Activated CD4-positive, alpha-beta memory T cell treated with anti-CD3 and anti-CD28 coated beads for 36 hours (primary cell): ENCODE measurements at regions of chr16 and their contacts with region 1.

Region 1: DNA sequence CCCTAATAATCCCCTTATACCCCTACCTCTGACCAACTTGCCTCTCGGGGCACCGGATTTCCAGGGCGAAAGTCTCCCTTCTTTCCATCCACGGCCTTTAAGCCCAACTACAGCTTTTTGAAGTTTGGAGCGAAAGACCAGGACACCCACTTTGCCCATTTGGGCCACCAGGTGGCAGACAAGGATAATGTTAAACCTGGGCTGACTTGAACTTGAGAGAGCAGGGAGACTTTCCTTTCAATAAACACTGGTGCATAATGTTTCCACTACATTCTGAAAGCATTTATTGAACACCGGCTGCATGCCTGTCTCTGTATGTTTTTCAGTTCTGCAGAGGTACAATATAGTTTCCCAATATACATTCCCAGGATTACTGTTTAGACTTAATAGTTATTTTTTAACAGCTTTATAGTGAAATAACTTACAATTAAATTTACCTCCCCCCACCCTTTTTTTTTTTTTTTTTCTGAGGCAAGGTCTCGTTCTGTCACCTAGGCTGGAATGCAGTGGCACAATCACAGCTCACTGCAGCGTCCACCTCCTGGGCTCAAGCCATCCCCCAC is 6.9 kb upstream of the CES3 start:
- DNase-seq: peak; percentile 88
- H3K4me3 Mint-ChIP-seq: no peak overlapping the region
- H3K27ac Mint-ChIP-seq: peak overlapping the region; percentile 9
- H3K4me1 Mint-ChIP-seq: peaks cover 15% of the 10 kb centered on the region
- H3K27me3 Mint-ChIP-seq: peaks cover 31% of the 10 kb centered on the region

Region 2: DNA sequence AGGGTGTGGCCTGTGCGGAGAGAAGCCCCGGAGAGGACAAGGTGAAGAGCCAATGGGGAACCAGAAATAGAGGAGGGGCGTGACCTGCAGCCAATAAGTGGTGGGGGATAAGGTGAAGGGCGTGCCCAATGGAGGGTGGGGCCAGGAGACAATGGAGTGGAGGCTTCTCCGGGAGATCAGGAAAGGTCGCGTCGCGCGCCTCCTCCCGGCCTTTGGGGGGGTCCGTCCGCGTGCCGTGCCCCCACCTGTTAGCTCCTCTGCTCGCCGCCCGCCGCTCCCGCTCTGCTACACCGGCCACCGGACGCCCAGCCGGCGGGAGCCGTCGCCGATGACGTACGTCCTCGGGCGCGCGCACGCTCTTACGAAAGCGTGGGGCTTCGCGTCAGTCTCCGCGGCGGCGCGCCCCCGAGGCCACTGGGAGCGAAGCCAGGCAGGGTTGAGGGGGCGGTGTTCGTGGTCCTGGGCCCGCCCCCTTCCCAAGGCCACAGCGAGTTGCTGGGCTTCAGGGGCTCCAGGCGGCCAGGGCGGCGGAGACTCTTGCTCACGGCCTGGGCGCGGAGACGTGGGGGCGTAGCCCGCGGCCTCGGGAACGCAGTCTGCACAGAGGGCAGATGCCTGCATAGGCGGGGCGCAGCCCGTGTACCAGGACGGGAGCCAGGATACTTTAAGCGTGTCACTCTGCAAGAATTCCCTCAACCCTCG is 229.6 kb after region 1 on chr16 and contains the start of gene MATCAP1:
- CTCF ChIA-PET with region 1: interaction called, 12 read pairs
- POLR2A ChIA-PET with region 1: no interaction called
- intact Hi-C with region 1: no loop called
- DNase-seq: peak; percentile 96
- H3K4me3 Mint-ChIP-seq: no peak within 1 kb of the TSS
- H3K27ac Mint-ChIP-seq: no peak within 1 kb of the TSS
- H3K4me1 Mint-ChIP-seq: peaks cover 14% of the 10 kb centered on the region
- H3K27me3 Mint-ChIP-seq: peaks cover 8% of the 10 kb centered on the region
- total RNA-seq, gene MATCAP1: 37.3 to 38.3 TPM